ENCODE measurements at regions of chr9 and their contacts with region 1.

Region 1: GRCh38 chr9:76704593-76705204 is 59.5 kb upstream of the PCA3 start:
- DNase-seq: peak in 1 of 2 experiments; percentile 24
- H3K4me3 ChIP-seq: no peak overlapping the region
- H3K4me3 Mint-ChIP-seq: no peak overlapping the region
- H3K27ac Mint-ChIP-seq: no peak overlapping the region
- H3K4me1 ChIP-seq: no peaks in the 10 kb centered on the region
- H3K4me1 Mint-ChIP-seq: no peaks in the 10 kb centered on the region
- H3K27me3 ChIP-seq: no peaks in the 10 kb centered on the region
- H3K27me3 Mint-ChIP-seq: no peaks in the 10 kb centered on the region
- CTCF ChIP-seq: peak in 1 of 2 experiments; percentile 6

Region 2: DNA sequence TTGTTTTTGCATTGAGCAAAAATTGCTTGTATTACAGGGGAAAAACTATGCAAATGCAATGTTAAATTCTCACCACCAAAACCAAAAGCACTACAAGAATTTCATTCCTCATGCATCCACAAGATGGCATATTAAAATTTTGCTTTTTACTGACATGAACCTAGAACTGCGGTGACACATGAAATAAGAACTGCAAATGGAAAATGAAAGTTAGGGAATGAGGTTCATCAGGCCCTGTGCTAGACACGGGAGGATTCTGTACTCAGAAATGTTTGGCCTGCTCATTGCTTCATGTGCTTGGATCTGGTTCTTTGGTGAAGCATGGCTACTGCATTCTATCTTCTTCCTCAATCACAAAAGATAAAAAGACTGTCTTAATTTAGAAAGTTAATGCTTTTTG is 301.3 kb before region 1 on chr9:
- CTCF ChIA-PET with region 1: no interaction called
- POLR2A ChIA-PET with region 1: no interaction called
- intact Hi-C with region 1: loop called (anchors 5 kb)
- DNase-seq: no peak
- H3K4me3 ChIP-seq: no peak overlapping the region
- H3K4me3 Mint-ChIP-seq: no peak overlapping the region
- H3K27ac Mint-ChIP-seq: no peak overlapping the region
- H3K4me1 ChIP-seq: no peaks in the 10 kb centered on the region
- H3K4me1 Mint-ChIP-seq: no peaks in the 10 kb centered on the region
- H3K27me3 ChIP-seq: no peaks in the 10 kb centered on the region
- H3K27me3 Mint-ChIP-seq: no peaks in the 10 kb centered on the region
- CTCF ChIP-seq: peak in 1 of 2 experiments; percentile 11

Region 3: DNA sequence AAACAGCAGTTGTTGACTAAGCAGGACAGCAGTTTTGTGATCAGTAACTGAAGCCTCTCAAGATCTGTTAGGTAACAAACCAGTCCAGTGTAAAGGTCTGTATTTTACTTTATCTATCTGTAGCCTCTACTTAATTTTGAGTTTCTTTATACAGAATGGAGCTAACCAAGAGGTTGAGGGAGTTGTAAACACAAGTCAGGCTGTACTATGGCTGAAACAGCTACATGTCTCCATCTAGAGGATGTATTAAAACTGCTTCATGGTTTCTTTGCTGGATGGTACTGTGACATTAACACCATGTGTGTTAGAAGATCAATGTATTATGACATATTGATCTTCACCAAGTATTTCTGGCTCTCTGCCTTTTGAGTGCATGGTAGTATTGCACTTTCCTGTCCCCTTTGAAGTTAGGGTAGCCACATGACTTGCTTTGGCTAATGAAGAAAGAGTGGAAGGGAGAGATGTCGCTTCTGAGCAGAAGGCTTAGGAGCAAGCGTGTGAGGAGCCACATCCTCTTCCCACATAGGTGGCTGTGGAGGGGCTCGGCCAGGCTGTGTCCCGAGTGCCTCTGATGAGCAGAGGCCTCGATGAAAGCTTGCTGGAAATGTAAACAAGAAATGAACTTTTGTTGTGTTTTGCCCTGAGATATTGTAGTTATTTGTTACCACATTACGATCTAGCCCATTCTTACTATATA is 46.0 kb before region 1 on chr9:
- CTCF ChIA-PET with region 1: no interaction called
- POLR2A ChIA-PET with region 1: no interaction called
- intact Hi-C with region 1: no loop called
- DNase-seq: peak in 1 of 2 experiments; percentile 17
- H3K4me3 ChIP-seq: no peak overlapping the region
- H3K4me3 Mint-ChIP-seq: no peak overlapping the region
- H3K27ac Mint-ChIP-seq: no peak overlapping the region
- H3K4me1 ChIP-seq: no peaks in the 10 kb centered on the region
- H3K4me1 Mint-ChIP-seq: no peaks in the 10 kb centered on the region
- H3K27me3 ChIP-seq: no peaks in the 10 kb centered on the region
- H3K27me3 Mint-ChIP-seq: no peaks in the 10 kb centered on the region
- CTCF ChIP-seq: peak in 1 of 2 experiments; percentile 19